ENCODE measurements at regions of chr19 and their contacts with region 1.

Region 1: DNA sequence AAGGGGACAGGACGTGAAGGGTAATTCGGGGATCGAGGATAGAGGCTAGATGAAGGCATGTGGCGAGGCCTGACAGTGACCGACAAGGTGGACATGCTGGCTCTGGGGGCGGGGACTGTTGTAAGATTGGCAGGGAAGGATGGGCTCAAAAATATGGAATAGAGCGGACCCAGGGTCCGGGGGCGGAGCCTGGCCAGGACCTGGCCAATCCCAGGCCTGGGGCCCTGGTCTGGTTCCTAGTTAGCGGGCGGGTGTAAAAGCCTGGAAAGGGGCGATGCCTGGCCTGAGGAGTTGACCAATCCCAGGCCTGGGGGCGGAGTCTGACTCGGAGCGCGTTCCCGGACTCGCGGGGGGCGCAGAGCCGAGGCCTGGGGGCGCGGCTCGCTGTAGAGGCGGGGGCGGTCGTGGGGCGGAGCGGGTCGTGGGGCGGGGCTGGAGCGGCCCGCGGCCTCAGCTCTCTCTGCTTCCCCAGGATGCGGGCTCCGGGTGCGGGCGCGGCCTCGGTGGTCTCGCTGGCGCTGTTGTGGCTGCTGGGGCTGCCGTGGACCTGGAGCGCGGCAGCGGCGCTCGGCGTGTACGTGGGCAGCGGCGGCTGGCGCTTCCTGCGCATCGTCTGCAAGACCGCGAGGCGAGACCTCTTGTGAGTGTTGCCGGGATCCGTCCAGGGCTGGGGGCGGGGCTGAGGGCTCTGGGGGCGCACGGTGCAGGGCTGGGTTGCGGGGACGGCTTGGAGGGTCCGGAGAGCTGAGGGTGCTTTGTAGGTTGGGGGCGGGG is at the start of gene SLC27A1:
- DNase-seq: peak; percentile 90
- H3K4me3 Mint-ChIP-seq: peak within 1 kb of the TSS; percentile 84
- H3K27ac Mint-ChIP-seq: peak within 1 kb of the TSS; percentile 10
- H3K4me1 Mint-ChIP-seq: peaks cover 26% of the 10 kb centered on the region
- H3K27me3 Mint-ChIP-seq: no peaks in the 10 kb centered on the region
- total RNA-seq, gene SLC27A1: 1.2 to 1.7 TPM

Region 2: GRCh38 chr19:17390665-17391370 is 79.4 kb before region 1 on chr19:
- CTCF ChIA-PET with region 1: interaction called, 5 read pairs
- intact Hi-C with region 1: loop called (anchors 1 kb)
- DNase-seq: peak; percentile 93
- H3K4me3 Mint-ChIP-seq: peak overlapping the region; percentile 82
- H3K27ac Mint-ChIP-seq: no peak overlapping the region
- H3K4me1 Mint-ChIP-seq: peaks cover 20% of the 10 kb centered on the region
- H3K27me3 Mint-ChIP-seq: no peaks in the 10 kb centered on the region

Region 3: DNA sequence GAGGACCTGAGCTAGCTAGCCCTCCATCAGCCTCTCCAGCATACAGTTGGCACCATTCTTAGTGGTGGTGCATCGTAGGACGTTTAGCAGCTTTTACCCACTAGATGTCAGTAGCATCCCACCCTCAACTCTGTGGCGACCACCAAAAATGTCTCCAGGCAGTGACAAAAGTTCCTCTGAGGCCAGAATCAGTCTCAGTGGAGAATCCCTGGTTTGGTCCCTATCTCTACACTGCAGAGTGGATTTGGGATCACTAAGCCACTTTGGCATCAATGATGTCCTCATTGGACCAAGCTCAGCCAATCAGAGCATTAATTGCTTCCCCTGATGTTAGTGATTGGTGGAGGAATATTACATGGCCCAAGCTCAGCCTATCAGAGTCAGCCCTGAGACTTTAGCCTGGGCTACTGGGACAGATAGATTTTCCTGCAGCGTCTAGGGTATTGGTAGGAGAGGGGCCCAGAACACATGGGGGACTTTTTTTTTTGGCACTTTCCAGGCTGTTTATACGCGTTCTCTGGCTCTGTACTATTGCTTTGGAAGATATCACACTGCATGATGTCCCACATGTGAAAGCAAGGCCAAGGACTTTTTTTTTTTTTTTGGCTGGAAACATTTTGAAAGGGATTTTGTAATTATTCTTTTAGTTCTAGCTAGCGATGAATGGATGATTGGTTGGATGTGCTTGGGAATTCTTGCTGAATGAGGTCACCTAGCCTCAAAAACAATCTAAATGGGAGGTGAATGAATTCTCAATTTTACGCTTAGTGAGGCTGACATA is 28.8 kb before region 1 on chr19:
- CTCF ChIA-PET with region 1: interaction called, 6 read pairs
- intact Hi-C with region 1: loop called (anchors 1 kb)
- DNase-seq: peak; percentile 31
- H3K4me3 Mint-ChIP-seq: no peak overlapping the region
- H3K27ac Mint-ChIP-seq: no peak overlapping the region
- H3K4me1 Mint-ChIP-seq: no peaks in the 10 kb centered on the region
- H3K27me3 Mint-ChIP-seq: no peaks in the 10 kb centered on the region

Region 4: GRCh38 chr19:17496337-17496997 is 26.2 kb after region 1 on chr19:
- CTCF ChIA-PET with region 1: interaction called, 14 read pairs
- intact Hi-C with region 1: no loop called
- DNase-seq: peak; percentile 89
- H3K4me3 Mint-ChIP-seq: no peak overlapping the region
- H3K27ac Mint-ChIP-seq: no peak overlapping the region
- H3K4me1 Mint-ChIP-seq: peaks cover 15% of the 10 kb centered on the region
- H3K27me3 Mint-ChIP-seq: no peaks in the 10 kb centered on the region

Region 5: GRCh38 chr19:17555480-17555928 is 85.2 kb after region 1 on chr19 and contains the start of gene COLGALT1:
- CTCF ChIA-PET with region 1: no interaction called
- intact Hi-C with region 1: loop called (anchors 1 kb)
- DNase-seq: peak; percentile 99
- H3K4me3 Mint-ChIP-seq: peak within 1 kb of the TSS; percentile 74
- H3K27ac Mint-ChIP-seq: no peak within 1 kb of the TSS
- H3K4me1 Mint-ChIP-seq: peaks cover 16% of the 10 kb centered on the region
- H3K27me3 Mint-ChIP-seq: no peaks in the 10 kb centered on the region
- total RNA-seq, gene COLGALT1: 36.8 to 37.3 TPM

Region 6: DNA sequence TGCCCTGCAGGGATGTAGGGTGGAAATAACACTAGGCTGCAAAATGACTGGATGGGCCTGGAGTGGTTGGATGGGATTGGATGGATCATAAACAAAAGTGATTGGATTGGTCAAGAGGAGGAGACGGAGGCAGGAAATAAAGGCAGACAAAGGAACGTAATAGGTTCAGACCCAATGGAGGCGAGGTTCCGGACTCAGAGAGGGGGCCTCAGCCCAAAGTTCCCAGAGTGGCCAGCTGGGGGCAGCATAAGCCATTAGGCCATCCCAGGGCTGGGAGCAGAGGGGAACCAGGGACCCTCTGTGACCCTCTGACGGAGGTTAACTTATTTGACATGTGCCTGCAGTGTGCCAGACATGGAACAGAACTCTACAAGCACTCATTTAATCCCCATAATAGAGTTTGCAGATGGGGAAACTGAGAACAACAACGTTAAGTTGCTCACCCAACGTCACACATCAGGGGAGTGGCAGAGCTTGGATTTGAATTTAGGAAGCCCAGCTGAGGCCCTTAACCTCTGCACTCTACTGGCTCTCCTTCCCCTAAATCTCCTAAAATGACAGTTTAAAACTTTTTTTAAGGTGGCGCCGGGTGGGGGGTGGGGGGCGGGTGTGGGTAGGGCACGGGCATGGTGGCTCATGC is 233.7 kb after region 1 on chr19:
- CTCF ChIA-PET with region 1: no interaction called
- intact Hi-C with region 1: no loop called
- DNase-seq: peak; percentile 82
- H3K4me3 Mint-ChIP-seq: no peak overlapping the region
- H3K27ac Mint-ChIP-seq: no peak overlapping the region
- H3K4me1 Mint-ChIP-seq: no peaks in the 10 kb centered on the region
- H3K27me3 Mint-ChIP-seq: peaks cover 2% of the 10 kb centered on the region

Region 7: GRCh38 chr19:17932485-17933338 is 462.5 kb after region 1 on chr19 and contains the start of gene CCDC124:
- CTCF ChIA-PET with region 1: no interaction called
- intact Hi-C with region 1: loop called (anchors 5 kb)
- DNase-seq: peak; percentile 95
- H3K4me3 Mint-ChIP-seq: peak within 1 kb of the TSS; percentile 95
- H3K27ac Mint-ChIP-seq: peak within 1 kb of the TSS; percentile 96
- H3K4me1 Mint-ChIP-seq: peaks cover 25% of the 10 kb centered on the region
- H3K27me3 Mint-ChIP-seq: no peaks in the 10 kb centered on the region
- total RNA-seq, gene CCDC124: 107 to 118 TPM

Region 8: GRCh38 chr19:18152444-18152816 is 682.2 kb after region 1 on chr19:
- CTCF ChIA-PET with region 1: no interaction called
- intact Hi-C with region 1: no loop called
- DNase-seq: peak; percentile 100
- H3K4me3 Mint-ChIP-seq: peak overlapping the region; percentile 79
- H3K27ac Mint-ChIP-seq: peak overlapping the region; percentile 93
- H3K4me1 Mint-ChIP-seq: peaks cover 22% of the 10 kb centered on the region
- H3K27me3 Mint-ChIP-seq: no peaks in the 10 kb centered on the region